Mammary epithelial cell (primary cell): ENCODE measurements at regions of chr16 and their contacts with region 1.

Region 1: GRCh38 chr16:89476804-89477261 is 13.5 kb downstream of the ANKRD11 start:
- DNase-seq: no peak
- H3K4me3 ChIP-seq: peak overlapping the region in 1 of 3 experiments; percentile 27
- H3K27ac ChIP-seq: peak overlapping the region; percentile 93
- H3K4me1 ChIP-seq: peaks cover 86% of the 10 kb centered on the region
- H3K27me3 ChIP-seq: no peaks in the 10 kb centered on the region
- CTCF ChIP-seq: no peak

Region 2: DNA sequence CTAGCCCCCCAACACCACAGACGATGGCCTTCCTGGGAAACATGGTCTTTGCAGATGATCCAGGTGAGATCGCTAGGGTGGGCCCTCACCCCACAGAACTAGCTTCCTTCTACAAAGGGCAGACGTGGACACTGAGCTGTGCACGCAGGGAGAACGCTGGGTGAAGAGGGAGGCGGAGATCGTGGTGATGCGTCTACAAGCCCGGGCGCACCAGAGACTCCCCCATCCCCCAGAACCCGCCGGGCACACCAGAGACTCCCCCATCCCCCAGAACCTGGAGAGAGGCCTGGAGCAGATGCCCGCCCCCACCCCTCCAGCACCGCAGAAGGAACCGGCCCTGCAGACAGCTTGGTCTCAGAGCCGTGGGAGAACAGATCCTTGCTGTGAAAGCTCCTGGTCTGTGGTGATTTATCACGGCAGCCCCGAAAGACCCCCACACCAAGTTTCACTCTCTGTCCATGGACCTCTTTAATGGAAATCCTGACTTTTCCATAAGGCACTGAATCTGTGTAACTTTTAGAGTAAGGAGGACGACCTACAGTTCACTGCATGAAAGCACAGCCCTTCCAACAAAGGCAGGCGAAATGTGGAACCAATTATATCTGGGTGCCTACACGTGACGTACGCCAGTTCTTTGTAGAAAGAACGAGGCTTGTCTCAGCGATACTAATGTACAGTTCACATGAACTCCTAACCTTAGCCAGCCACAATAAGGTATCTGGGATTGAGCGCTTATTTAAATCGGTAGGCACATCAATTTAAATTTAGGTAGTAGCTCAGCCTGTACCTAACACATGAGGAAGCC is 75.0 kb before region 1 on chr16:
- CTCF ChIA-PET with region 1: no interaction called
- dilution Hi-C with region 1: loop called (anchors 5 kb)
- in situ Hi-C with region 1: no loop called
- intact Hi-C with region 1: no loop called
- DNase-seq: no peak
- H3K4me3 ChIP-seq: no peak overlapping the region
- H3K27ac ChIP-seq: no peak overlapping the region
- H3K4me1 ChIP-seq: peaks cover 13% of the 10 kb centered on the region
- H3K27me3 ChIP-seq: no peaks in the 10 kb centered on the region
- CTCF ChIP-seq: no peak

Region 3: DNA sequence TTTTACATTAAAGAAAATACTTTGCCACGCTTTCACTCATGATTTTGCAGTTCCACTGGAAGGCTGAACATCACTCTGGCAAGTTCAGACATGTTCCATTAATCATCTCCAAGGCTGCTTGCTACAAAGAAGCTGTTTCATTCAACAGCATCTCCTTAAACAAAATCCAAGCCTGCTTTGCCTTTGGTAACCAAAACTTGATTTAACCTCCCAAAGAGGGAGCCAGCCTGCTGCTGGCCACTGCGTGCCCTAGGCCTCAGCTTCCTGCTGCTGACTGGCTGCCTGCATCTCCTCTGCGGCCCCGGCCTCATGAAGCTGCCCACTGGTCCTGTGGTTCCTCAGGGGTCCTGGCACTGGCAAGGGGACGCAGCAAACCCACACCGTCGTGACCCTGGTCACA is 18.3 kb before region 1 on chr16:
- CTCF ChIA-PET with region 1: no interaction called
- dilution Hi-C with region 1: no loop called
- in situ Hi-C with region 1: no loop called
- intact Hi-C with region 1: loop called (anchors 2 kb)
- DNase-seq: peak; percentile 92
- H3K4me3 ChIP-seq: no peak overlapping the region
- H3K27ac ChIP-seq: peak overlapping the region; percentile 71
- H3K4me1 ChIP-seq: peaks cover 27% of the 10 kb centered on the region
- H3K27me3 ChIP-seq: no peaks in the 10 kb centered on the region
- CTCF ChIP-seq: peak in 1 of 2 donors; percentile 18

Region 4: DNA sequence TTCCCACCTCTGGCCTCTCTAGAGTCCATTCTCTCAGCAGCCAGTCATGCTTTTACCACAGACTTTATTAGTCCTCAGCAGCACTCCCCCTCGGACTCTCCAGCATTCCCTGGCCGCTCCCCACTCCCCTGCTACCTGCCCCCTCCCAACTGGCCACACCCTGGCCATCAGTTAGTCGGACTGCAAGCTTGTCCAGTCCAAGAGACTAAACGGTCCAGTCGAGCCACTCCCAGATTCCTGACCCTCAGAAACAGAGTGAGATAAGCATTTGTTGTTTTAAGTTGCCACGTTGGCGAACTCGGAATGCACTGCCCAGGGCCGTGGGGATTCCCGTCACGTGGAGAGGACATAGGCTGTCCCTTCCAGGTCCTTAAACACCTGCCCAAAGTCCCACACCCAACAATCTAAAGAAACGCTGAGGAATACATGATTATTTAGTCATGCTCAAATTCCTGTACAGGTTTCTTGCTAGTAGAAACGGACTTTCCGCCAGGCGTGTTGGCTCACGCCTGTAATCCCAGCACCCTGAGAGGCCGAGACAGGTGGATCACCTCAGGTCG is 25.6 kb after region 1 on chr16:
- CTCF ChIA-PET with region 1: no interaction called
- dilution Hi-C with region 1: no loop called
- in situ Hi-C with region 1: no loop called
- intact Hi-C with region 1: loop called (anchors 1 kb)
- DNase-seq: peak; percentile 95
- H3K4me3 ChIP-seq: no peak overlapping the region
- H3K27ac ChIP-seq: peak overlapping the region; percentile 42
- H3K4me1 ChIP-seq: peaks cover 28% of the 10 kb centered on the region
- H3K27me3 ChIP-seq: no peaks in the 10 kb centered on the region
- CTCF ChIP-seq: no peak

Region 5: GRCh38 chr16:89633064-89633631 is 156.3 kb after region 1 on chr16:
- CTCF ChIA-PET with region 1: no interaction called
- dilution Hi-C with region 1: no loop called
- in situ Hi-C with region 1: no loop called
- intact Hi-C with region 1: no loop called
- DNase-seq: peak; percentile 85
- H3K4me3 ChIP-seq: no peak overlapping the region
- H3K27ac ChIP-seq: no peak overlapping the region
- H3K4me1 ChIP-seq: peaks cover 16% of the 10 kb centered on the region
- H3K27me3 ChIP-seq: peaks cover 1% of the 10 kb centered on the region
- CTCF ChIP-seq: no peak